ENCODE measurements at regions of chrX and their contacts with region 1.

Region 1: DNA sequence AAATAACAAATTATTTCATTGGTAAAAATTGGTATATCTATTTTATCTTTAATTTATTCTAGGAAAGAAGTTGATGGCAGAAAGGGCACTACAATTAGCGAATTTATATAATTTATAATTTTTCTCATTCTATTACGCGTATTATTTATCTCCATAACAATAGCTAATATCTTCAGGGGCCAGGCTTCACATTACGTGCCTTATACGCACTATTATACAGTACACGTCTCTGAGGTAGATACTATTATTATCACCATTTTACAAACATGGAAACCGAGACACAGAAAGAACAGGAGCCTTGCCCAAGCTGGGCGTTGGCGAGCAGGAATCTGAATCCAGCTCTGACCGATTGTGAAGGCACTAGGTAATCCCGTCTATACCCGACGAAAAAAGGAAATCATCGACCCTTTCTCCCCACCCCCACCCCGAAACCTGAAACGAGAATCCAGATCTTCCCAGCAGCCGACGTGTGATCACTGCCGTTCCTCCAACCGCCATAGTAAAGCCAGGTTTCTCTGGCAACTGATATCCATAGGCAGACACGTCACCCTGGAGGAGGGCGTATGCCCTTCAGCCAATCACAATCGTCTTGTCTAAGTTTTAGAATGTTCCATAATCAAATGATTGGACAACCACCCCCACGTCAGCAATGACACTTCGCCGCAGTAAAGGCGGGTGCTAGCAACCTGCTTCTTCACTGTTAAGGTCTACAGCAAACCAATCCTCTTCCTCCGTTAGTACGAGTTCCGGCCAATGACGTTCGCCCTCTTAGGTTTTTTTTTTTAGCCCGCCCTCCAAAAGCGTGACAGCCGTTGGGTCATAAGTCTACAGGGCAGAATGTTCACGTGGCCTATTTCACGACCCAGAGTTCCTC is at the start of gene MORF4L2:
- DNase-seq: peak; percentile 92
- H3K4me3 ChIP-seq: peak within 1 kb of the TSS; percentile 44 to 51
- H3K27ac ChIP-seq: peak within 1 kb of the TSS; percentile 95 to 96
- H3K4me1 ChIP-seq: no peaks in the 10 kb centered on the region
- H3K27me3 ChIP-seq: no peaks in the 10 kb centered on the region
- CTCF ChIP-seq: no peak
- POLR2A ChIP-seq: peak; percentile 91
- total RNA-seq, gene MORF4L2: 287 to 313 TPM

Region 2: GRCh38 chrX:103533511-103534216 is 152.8 kb before region 1 on chrX:
- intact Hi-C with region 1: loop called (anchors 2 kb)
- DNase-seq: peak; percentile 65
- H3K4me3 ChIP-seq: peak overlapping the region; percentile 10 to 20
- H3K27ac ChIP-seq: peak overlapping the region; percentile 57 to 81
- H3K4me1 ChIP-seq: no peaks in the 10 kb centered on the region
- H3K27me3 ChIP-seq: no peaks in the 10 kb centered on the region
- CTCF ChIP-seq: peak; percentile 31 to 80 (median 68)
- POLR2A ChIP-seq: no peak

Region 3: GRCh38 chrX:103629318-103630170 is 56.9 kb before region 1 on chrX:
- intact Hi-C with region 1: loop called (anchors 5 kb)
- DNase-seq: peak; percentile 57
- H3K4me3 ChIP-seq: peak overlapping the region; percentile 48 to 52
- H3K27ac ChIP-seq: peak overlapping the region; percentile 94 to 95
- H3K4me1 ChIP-seq: no peaks in the 10 kb centered on the region
- H3K27me3 ChIP-seq: no peaks in the 10 kb centered on the region
- CTCF ChIP-seq: peak in 3 of 4 experiments; percentile 15 to 52 (median 49)
- POLR2A ChIP-seq: peak; percentile 45

Region 4: GRCh38 chrX:103730796-103731493 is 44.5 kb after region 1 on chrX:
- intact Hi-C with region 1: no loop called
- DNase-seq: no peak
- H3K4me3 ChIP-seq: no peak overlapping the region
- H3K27ac ChIP-seq: no peak overlapping the region
- H3K4me1 ChIP-seq: no peaks in the 10 kb centered on the region
- H3K27me3 ChIP-seq: no peaks in the 10 kb centered on the region
- CTCF ChIP-seq: no peak
- POLR2A ChIP-seq: no peak

Region 5: DNA sequence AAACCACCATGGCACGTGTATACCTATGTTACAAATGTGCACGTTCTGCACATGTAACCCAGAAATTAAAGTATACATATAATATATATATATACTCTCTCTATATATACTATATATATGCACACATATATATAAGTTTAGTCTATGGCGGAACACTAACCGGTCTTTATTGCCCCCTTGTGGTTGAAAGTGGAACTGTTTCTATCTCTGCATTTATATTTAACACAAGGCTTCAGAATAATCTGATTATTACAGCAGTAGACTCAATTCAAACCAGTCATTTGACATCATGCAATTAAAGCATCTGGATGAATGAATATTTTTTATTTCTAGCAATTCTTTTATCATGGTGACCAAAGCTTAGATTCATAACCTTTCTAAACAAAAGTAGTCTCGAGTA is 131.1 kb after region 1 on chrX:
- intact Hi-C with region 1: loop called (anchors 5 kb)
- DNase-seq: peak; percentile 33
- H3K4me3 ChIP-seq: no peak overlapping the region
- H3K27ac ChIP-seq: no peak overlapping the region
- H3K4me1 ChIP-seq: no peaks in the 10 kb centered on the region
- H3K27me3 ChIP-seq: no peaks in the 10 kb centered on the region
- CTCF ChIP-seq: peak; percentile 57 to 81 (median 76)
- POLR2A ChIP-seq: no peak

Region 6: GRCh38 chrX:103949506-103949905 is 263.1 kb after region 1 on chrX:
- intact Hi-C with region 1: no loop called
- DNase-seq: no peak
- H3K4me3 ChIP-seq: no peak overlapping the region
- H3K27ac ChIP-seq: no peak overlapping the region
- H3K4me1 ChIP-seq: no peaks in the 10 kb centered on the region
- H3K27me3 ChIP-seq: no peaks in the 10 kb centered on the region
- CTCF ChIP-seq: no peak
- POLR2A ChIP-seq: no peak

Measured in prostate gland (tissue), 2 donors.